ENCODE measurements at regions of chr9 and their contacts with region 1.

Region 1: GRCh38 chr9:34048923-34049697 is 423 bp upstream of the UBAP2 start:
- DNase-seq: peak; percentile 92 to 98 (median 96)
- ATAC-seq: peak; percentile 82
- H3K4me3 ChIP-seq: peak overlapping the region; percentile 98
- H3K4me3 Mint-ChIP-seq: peak overlapping the region; percentile 92
- H3K27ac ChIP-seq: peak overlapping the region; percentile 83 to 93
- H3K27ac Mint-ChIP-seq: peak overlapping the region; percentile 97
- H3K4me1 ChIP-seq: peaks cover 26% of the 10 kb centered on the region
- H3K4me1 Mint-ChIP-seq: peaks cover 34% of the 10 kb centered on the region
- H3K27me3 ChIP-seq: no peaks in the 10 kb centered on the region
- H3K27me3 Mint-ChIP-seq: no peaks in the 10 kb centered on the region
- CTCF ChIP-seq: no peak

Region 2: DNA sequence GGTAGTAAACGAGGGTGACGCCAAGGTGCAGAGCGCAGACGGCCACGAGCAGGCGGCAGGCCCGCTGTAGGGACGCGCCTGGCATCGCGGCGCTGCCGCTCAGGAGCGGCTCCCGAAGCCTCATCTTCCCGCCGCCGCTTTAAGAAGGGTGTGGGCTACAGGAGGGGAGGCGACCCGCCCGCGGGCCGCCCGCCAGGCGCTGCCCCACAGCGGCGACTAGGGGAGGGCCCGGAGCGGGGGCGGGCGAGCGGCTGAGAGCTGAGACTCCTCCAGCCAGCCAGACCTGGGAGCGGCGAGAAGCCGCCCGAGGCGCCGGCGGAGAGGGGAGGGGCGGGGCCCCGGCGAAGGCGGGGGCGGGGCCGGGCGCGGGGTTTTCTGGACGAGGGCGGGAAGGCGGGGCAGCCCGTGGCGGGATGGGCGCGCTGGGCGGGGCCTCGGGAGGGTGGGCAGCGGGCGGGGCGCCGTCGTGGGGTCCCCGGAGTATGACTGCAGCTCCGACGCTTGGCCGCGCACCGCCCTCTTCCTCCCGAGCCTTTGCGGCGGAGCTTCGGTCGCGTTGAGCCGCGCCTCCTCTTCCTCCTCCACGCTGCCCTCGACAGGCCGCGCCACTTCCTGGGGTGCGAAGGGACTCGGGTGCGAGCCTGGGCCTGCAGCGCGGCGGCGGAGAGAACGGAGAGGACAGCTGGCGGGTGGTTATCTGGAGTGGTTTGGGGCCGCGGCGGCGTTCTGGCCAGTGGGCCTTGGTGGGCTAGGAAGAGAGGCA is 881.9 kb before region 1 on chr9 and contains the start of gene B4GALT1:
- CTCF ChIA-PET with region 1: no interaction called
- POLR2A ChIA-PET with region 1: no interaction called
- intact Hi-C with region 1: no loop called
- DNase-seq: peak; percentile 90 to 99 (median 97)
- ATAC-seq: peak; percentile 77
- H3K4me3 ChIP-seq: peak within 1 kb of the TSS; percentile 85
- H3K4me3 Mint-ChIP-seq: peak within 1 kb of the TSS; percentile 93
- H3K27ac ChIP-seq: peak within 1 kb of the TSS; percentile 89 to 94
- H3K27ac Mint-ChIP-seq: peak within 1 kb of the TSS; percentile 97
- H3K4me1 ChIP-seq: peaks cover 54% of the 10 kb centered on the region
- H3K4me1 Mint-ChIP-seq: peaks cover 61% of the 10 kb centered on the region
- H3K27me3 ChIP-seq: no peaks in the 10 kb centered on the region
- H3K27me3 Mint-ChIP-seq: no peaks in the 10 kb centered on the region
- CTCF ChIP-seq: no peak
- total RNA-seq, gene B4GALT1: 74.7 to 77.0 TPM

Region 3: GRCh38 chr9:33816327-33817252 is 232.5 kb before region 1 on chr9 and contains the start of gene UBE2R2:
- CTCF ChIA-PET with region 1: no interaction called
- POLR2A ChIA-PET with region 1: interaction called, 6 read pairs
- intact Hi-C with region 1: loop called (anchors 5 to 10 kb)
- DNase-seq: peak; percentile 89 to 99 (median 92)
- ATAC-seq: peak; percentile 80
- H3K4me3 ChIP-seq: peak within 1 kb of the TSS; percentile 64
- H3K4me3 Mint-ChIP-seq: peak within 1 kb of the TSS; percentile 96
- H3K27ac ChIP-seq: peak within 1 kb of the TSS; percentile 96
- H3K27ac Mint-ChIP-seq: peak within 1 kb of the TSS; percentile 98
- H3K4me1 ChIP-seq: peaks cover 34% of the 10 kb centered on the region
- H3K4me1 Mint-ChIP-seq: peaks cover 59% of the 10 kb centered on the region
- H3K27me3 ChIP-seq: no peaks in the 10 kb centered on the region
- H3K27me3 Mint-ChIP-seq: no peaks in the 10 kb centered on the region
- CTCF ChIP-seq: no peak
- total RNA-seq, gene UBE2R2: 22.7 to 24.5 TPM

Region 4: GRCh38 chr9:34126207-34127034 is 77.3 kb after region 1 on chr9 and contains the start of gene DCAF12:
- CTCF ChIA-PET with region 1: no interaction called
- POLR2A ChIA-PET with region 1: interaction called, 3 read pairs
- intact Hi-C with region 1: loop called (anchors 1 to 5 kb)
- DNase-seq: peak; percentile 81 to 97 (median 88)
- ATAC-seq: peak; percentile 94
- H3K4me3 ChIP-seq: peak within 1 kb of the TSS; percentile 86
- H3K4me3 Mint-ChIP-seq: peak within 1 kb of the TSS; percentile 100
- H3K27ac ChIP-seq: peak within 1 kb of the TSS; percentile 86 to 88
- H3K27ac Mint-ChIP-seq: peak within 1 kb of the TSS; percentile 99
- H3K4me1 ChIP-seq: peaks cover 45% of the 10 kb centered on the region
- H3K4me1 Mint-ChIP-seq: peaks cover 57% of the 10 kb centered on the region
- H3K27me3 ChIP-seq: no peaks in the 10 kb centered on the region
- H3K27me3 Mint-ChIP-seq: no peaks in the 10 kb centered on the region
- CTCF ChIP-seq: no peak
- total RNA-seq, gene DCAF12: 5.4 to 5.9 TPM

Region 5: GRCh38 chr9:34178520-34179212 is 129.6 kb after region 1 on chr9 and contains the start of gene UBAP1:
- CTCF ChIA-PET with region 1: no interaction called
- POLR2A ChIA-PET with region 1: interaction called, 17 read pairs
- intact Hi-C with region 1: loop called (anchors 2 to 5 kb)
- DNase-seq: peak; percentile 88 to 98 (median 94)
- ATAC-seq: peak; percentile 97
- H3K4me3 ChIP-seq: peak within 1 kb of the TSS; percentile 71
- H3K4me3 Mint-ChIP-seq: peak within 1 kb of the TSS; percentile 94
- H3K27ac ChIP-seq: peak within 1 kb of the TSS; percentile 87 to 90
- H3K27ac Mint-ChIP-seq: peak within 1 kb of the TSS; percentile 90
- H3K4me1 ChIP-seq: peaks cover 32% of the 10 kb centered on the region
- H3K4me1 Mint-ChIP-seq: peaks cover 15% of the 10 kb centered on the region
- H3K27me3 ChIP-seq: no peaks in the 10 kb centered on the region
- H3K27me3 Mint-ChIP-seq: no peaks in the 10 kb centered on the region
- CTCF ChIP-seq: no peak
- total RNA-seq, gene UBAP1: 47.1 to 50.4 TPM

Region 6: DNA sequence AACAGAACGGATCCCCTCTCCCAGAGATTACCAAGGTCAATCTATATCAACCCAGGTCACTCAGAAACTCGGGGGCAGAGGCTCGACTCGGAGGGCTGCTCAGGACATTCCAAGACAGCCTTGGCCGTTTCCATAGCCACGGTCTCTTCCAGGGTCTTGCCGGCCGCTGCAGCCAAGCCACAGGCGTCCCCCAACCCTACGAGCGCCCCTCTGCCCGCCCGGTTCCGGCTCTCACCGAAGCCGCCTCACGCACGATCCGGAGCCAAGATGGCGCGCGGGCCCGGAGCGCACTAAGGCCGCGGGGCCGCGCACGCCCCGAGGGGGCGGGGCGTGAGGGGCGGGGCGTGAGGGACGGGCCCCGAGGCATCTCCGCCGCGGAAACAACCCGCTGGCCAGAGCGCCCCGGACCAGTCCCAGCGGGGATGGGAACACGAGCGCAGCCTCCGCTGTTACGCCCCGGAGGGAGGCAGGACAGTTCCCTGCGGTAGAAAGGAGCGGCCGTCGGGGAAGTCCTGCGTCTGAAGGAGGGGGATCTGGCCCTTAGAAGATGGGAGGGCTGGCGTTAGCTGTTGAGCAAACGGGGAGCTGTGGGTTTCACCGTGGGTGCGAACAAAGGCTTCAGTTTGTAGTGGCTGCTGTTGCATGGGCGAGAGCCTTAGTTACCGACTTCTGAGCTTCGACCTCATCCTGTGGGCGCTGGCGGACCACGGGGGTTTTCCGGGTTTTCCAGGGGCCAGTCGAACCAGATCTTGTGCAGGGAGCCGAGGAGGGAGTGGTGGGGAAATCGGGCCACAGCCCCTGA is 562.9 kb after region 1 on chr9 and contains the start of gene RPP25L:
- CTCF ChIA-PET with region 1: no interaction called
- POLR2A ChIA-PET with region 1: no interaction called
- intact Hi-C with region 1: loop called in 1 of 2 experiments (anchors 10 kb)
- DNase-seq: peak; percentile 64 to 94 (median 82)
- ATAC-seq: peak; percentile 91
- H3K4me3 ChIP-seq: peak within 1 kb of the TSS; percentile 95
- H3K4me3 Mint-ChIP-seq: peak within 1 kb of the TSS; percentile 84
- H3K27ac ChIP-seq: peak within 1 kb of the TSS; percentile 79 to 83
- H3K27ac Mint-ChIP-seq: peak within 1 kb of the TSS; percentile 40
- H3K4me1 ChIP-seq: peaks cover 28% of the 10 kb centered on the region
- H3K4me1 Mint-ChIP-seq: peaks cover 24% of the 10 kb centered on the region
- H3K27me3 ChIP-seq: no peaks in the 10 kb centered on the region
- H3K27me3 Mint-ChIP-seq: no peaks in the 10 kb centered on the region
- CTCF ChIP-seq: no peak
- total RNA-seq, gene RPP25L: 4.6 to 5.7 TPM

Measured in CD4-positive, alpha-beta T cell (primary cell).